ENCODE measurements at regions of chr7 and their contacts with region 1.

Region 1: DNA sequence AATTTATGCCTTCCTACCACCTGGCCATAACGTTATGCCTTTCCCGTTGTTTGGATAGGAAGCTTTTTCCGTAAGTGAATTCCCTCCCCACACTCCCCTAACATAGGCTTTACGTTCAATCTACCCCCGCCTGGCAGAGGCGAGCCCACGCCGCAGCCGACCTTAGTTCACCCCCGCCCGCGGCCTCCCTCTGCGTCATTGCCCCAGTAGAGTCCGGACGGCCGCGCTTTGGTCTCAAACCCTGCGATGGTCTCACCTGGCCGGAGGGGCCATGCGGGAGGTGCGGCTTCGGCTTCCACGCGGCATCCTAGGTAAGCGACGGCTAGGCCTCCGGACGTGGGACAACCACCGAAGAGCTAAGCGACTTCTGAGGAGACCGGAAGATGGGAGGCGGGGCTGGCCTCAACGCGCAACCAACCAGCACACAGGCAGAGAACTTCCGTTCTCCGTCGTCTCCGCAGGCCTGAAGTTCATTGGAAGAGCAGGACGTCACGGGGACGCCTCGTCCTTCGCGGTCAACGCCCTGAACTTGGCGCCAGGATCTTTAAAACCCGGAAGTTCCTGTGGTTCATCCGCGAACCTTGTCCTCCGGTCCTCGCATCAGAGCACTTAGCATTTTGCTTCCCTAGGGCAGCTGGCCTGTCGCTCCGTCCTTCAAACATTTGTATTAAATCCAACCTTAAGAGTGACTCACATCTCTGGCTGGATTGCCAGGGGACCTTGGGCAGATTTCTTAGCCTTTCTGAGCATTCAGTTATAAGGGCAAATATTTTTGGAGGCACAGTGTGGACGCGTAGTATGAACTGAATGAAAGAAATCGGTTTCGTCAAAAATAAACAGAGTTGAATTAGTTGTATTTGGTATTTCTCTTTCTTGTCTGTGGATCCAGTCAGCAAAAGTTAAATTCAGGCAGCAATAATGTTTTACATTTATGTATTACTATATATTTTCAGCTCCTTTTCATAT is at the start of gene CHCHD2:
- DNase-seq: peak; percentile 75 to 96 (median 93)
- ATAC-seq: peak; percentile 99
- H3K4me3 ChIP-seq: peak within 1 kb of the TSS; percentile 72
- H3K4me3 Mint-ChIP-seq: peak within 1 kb of the TSS; percentile 94 to 100 (median 96)
- H3K27ac ChIP-seq: peak within 1 kb of the TSS; percentile 95
- H3K27ac Mint-ChIP-seq: peak within 1 kb of the TSS; percentile 97 to 99 (median 98)
- H3K4me1 ChIP-seq: peaks cover 18 to 20% of the 10 kb centered on the region in 2 donors
- H3K4me1 Mint-ChIP-seq: peaks cover 19 to 43% (median 33%) of the 10 kb centered on the region in 7 donors
- H3K27me3 ChIP-seq: no peaks in the 10 kb centered on the region
- H3K27me3 Mint-ChIP-seq: no peaks in the 10 kb centered on the region
- total RNA-seq, gene CHCHD2: 133 to 451 (median 179) TPM

Region 2: DNA sequence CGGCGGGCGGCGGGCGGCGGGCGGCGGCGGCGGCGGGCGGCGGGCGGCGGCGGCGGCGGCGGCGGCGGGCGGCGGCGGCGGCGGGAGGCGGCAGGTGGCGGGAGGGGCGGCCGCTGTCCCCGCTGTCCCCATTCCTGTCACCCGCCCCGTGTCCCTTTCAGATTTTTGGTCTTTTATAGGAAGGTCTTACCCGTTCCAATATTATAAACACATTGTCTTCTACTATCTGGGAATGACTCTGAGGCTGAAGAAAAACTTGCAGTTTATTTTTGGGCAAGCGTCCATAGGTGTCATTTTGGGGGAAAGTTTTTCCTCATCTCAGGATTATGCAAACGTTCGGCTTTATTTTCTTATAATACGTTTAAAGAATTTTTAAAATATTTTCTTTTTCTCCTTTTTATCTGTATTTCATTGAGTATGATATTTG is 218.6 kb before region 1 on chr7:
- CTCF ChIA-PET with region 1: no interaction called
- POLR2A ChIA-PET with region 1: no interaction called
- intact Hi-C with region 1: loop called (anchors 1 to 2 kb)
- DNase-seq: peak in 2 of 9 donors; percentile 2 to 6
- ATAC-seq: no peak
- H3K4me3 ChIP-seq: peak overlapping the region; percentile 46
- H3K4me3 Mint-ChIP-seq: peak overlapping the region; percentile 82 to 89 (median 86)
- H3K27ac ChIP-seq: peak overlapping the region; percentile 61
- H3K27ac Mint-ChIP-seq: peak overlapping the region; percentile 83 to 94 (median 90)
- H3K4me1 ChIP-seq: no peaks in the 10 kb centered on the region
- H3K4me1 Mint-ChIP-seq: peaks cover 0 to 10% (median 5%) of the 10 kb centered on the region in 7 donors
- H3K27me3 ChIP-seq: no peaks in the 10 kb centered on the region
- H3K27me3 Mint-ChIP-seq: no peaks in the 10 kb centered on the region

Region 3: GRCh38 chr7:55964261-55965099 is 141.9 kb before region 1 on chr7 and contains the start of gene NIPSNAP2:
- CTCF ChIA-PET with region 1: no interaction called
- POLR2A ChIA-PET with region 1: interaction called, 5 read pairs
- intact Hi-C with region 1: loop called in 1 of 2 experiments (anchors 2 kb)
- DNase-seq: peak; percentile 37 to 86 (median 68)
- ATAC-seq: peak; percentile 94
- H3K4me3 ChIP-seq: peak within 1 kb of the TSS; percentile 50
- H3K4me3 Mint-ChIP-seq: peak within 1 kb of the TSS; percentile 79 to 91 (median 88)
- H3K27ac ChIP-seq: peak within 1 kb of the TSS; percentile 89
- H3K27ac Mint-ChIP-seq: peak within 1 kb of the TSS; percentile 89 to 94 (median 91)
- H3K4me1 ChIP-seq: peaks cover 10% of the 10 kb centered on the region in 2 donors
- H3K4me1 Mint-ChIP-seq: peaks cover 24 to 55% (median 42%) of the 10 kb centered on the region in 7 donors
- H3K27me3 ChIP-seq: no peaks in the 10 kb centered on the region
- H3K27me3 Mint-ChIP-seq: no peaks in the 10 kb centered on the region
- total RNA-seq, gene NIPSNAP2: 30.1 to 37.8 (median 34.4) TPM

Region 4: GRCh38 chr7:56063882-56064625 is 42.3 kb before region 1 on chr7 and contains the start of gene SUMF2:
- CTCF ChIA-PET with region 1: no interaction called
- POLR2A ChIA-PET with region 1: interaction called, 19 read pairs
- intact Hi-C with region 1: loop called (anchors 1 kb)
- DNase-seq: peak; percentile 86 to 96 (median 93)
- ATAC-seq: peak; percentile 96
- H3K4me3 ChIP-seq: peak within 1 kb of the TSS; percentile 98
- H3K4me3 Mint-ChIP-seq: peak within 1 kb of the TSS; percentile 83 to 95 (median 92)
- H3K27ac ChIP-seq: peak within 1 kb of the TSS; percentile 88
- H3K27ac Mint-ChIP-seq: peak within 1 kb of the TSS; percentile 93 to 98 (median 96)
- H3K4me1 ChIP-seq: peaks cover 7 to 8% of the 10 kb centered on the region in 2 donors
- H3K4me1 Mint-ChIP-seq: peaks cover 16 to 37% (median 22%) of the 10 kb centered on the region in 7 donors
- H3K27me3 ChIP-seq: no peaks in the 10 kb centered on the region
- H3K27me3 Mint-ChIP-seq: peaks cover 0 to 2% (median 0%) of the 10 kb centered on the region in 5 donors
- total RNA-seq, gene SUMF2: 120 to 176 (median 122) TPM

Region 5: GRCh38 chr7:56206420-56206819 is 100.0 kb after region 1 on chr7:
- CTCF ChIA-PET with region 1: interaction called, 3 read pairs
- POLR2A ChIA-PET with region 1: no interaction called
- intact Hi-C with region 1: loop called in 1 of 2 experiments (anchors 5 kb)
- DNase-seq: no peak
- ATAC-seq: no peak
- H3K4me3 ChIP-seq: no peak overlapping the region
- H3K4me3 Mint-ChIP-seq: no peak overlapping the region
- H3K27ac ChIP-seq: no peak overlapping the region
- H3K27ac Mint-ChIP-seq: no peak overlapping the region
- H3K4me1 ChIP-seq: no peaks in the 10 kb centered on the region
- H3K4me1 Mint-ChIP-seq: no peaks in the 10 kb centered on the region
- H3K27me3 ChIP-seq: no peaks in the 10 kb centered on the region
- H3K27me3 Mint-ChIP-seq: peaks cover 0 to 15% (median 4%) of the 10 kb centered on the region in 5 donors

Measured in naive thymus-derived CD4-positive, alpha-beta T cell (primary cell).